T-cell (primary cell): ENCODE measurements at regions of chr9 and their contacts with region 1.

Region 1: GRCh38 chr9:70656281-70656680 is 241.8 kb upstream of the KLF9 start:
- DNase-seq: no peak
- ATAC-seq: no peak
- H3K4me3 ChIP-seq: no peak overlapping the region
- H3K4me3 Mint-ChIP-seq: no peak overlapping the region
- H3K27ac ChIP-seq: no peak overlapping the region
- H3K27ac Mint-ChIP-seq: no peak overlapping the region
- H3K4me1 ChIP-seq: no peaks in the 10 kb centered on the region
- H3K4me1 Mint-ChIP-seq: no peaks in the 10 kb centered on the region
- H3K27me3 ChIP-seq: peaks cover 0 to 4% of the 10 kb centered on the region in 2 experiments
- H3K27me3 Mint-ChIP-seq: peaks cover 2 to 7% of the 10 kb centered on the region in 2 donors

Region 2: DNA sequence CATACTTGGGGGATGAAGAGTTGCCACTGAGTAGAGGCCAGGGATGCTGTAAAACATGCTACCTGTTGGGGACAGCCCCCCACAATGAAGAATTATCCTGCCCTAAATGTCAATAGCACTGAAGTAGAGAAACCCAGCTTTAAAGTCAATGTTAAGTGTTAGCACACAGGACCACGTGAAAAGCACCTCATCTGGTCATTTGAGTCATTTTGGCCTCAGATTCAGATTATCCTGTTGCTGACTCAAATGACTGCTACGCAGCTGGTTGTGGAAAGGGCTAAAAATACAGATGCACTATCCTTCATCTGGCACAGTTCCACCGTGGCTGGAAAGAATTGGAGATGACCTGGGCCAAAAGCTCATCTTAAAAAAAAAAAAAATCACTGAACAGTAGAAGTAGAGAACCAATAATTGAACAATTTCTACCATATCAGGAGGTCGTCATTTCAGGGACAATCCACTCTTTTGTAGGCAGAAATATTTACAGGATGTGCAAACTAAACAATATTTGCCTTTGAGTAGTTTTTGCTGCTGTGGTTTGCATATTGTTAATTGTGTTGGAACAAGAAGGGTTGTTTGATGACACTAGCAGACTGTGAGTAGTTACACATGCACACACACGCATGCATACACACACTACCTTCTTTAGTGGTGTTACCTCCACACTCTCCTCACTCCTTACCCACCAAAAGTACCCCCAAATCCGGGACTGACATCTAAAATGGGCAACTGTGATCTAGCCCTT is 46.6 kb before region 1 on chr9:
- CTCF ChIA-PET with region 1: no interaction called
- POLR2A ChIA-PET with region 1: no interaction called
- DNase-seq: no peak
- ATAC-seq: no peak
- H3K4me3 ChIP-seq: no peak overlapping the region
- H3K4me3 Mint-ChIP-seq: no peak overlapping the region
- H3K27ac ChIP-seq: no peak overlapping the region
- H3K27ac Mint-ChIP-seq: no peak overlapping the region
- H3K4me1 ChIP-seq: no peaks in the 10 kb centered on the region
- H3K4me1 Mint-ChIP-seq: peaks cover 0 to 4% (median 3%) of the 10 kb centered on the region in 3 donors
- H3K27me3 ChIP-seq: no peaks in the 10 kb centered on the region
- H3K27me3 Mint-ChIP-seq: peaks cover 0 to 6% of the 10 kb centered on the region in 2 donors

Region 3: GRCh38 chr9:72407114-72407513 is 1750.8 kb after region 1 on chr9:
- CTCF ChIA-PET with region 1: interaction called in 1 of 2 experiments, 12 read pairs
- POLR2A ChIA-PET with region 1: no interaction called
- DNase-seq: no peak
- ATAC-seq: no peak
- H3K4me3 ChIP-seq: no peak overlapping the region
- H3K4me3 Mint-ChIP-seq: no peak overlapping the region
- H3K27ac ChIP-seq: no peak overlapping the region
- H3K27ac Mint-ChIP-seq: no peak overlapping the region
- H3K4me1 ChIP-seq: no peaks in the 10 kb centered on the region
- H3K4me1 Mint-ChIP-seq: no peaks in the 10 kb centered on the region
- H3K27me3 ChIP-seq: no peaks in the 10 kb centered on the region
- H3K27me3 Mint-ChIP-seq: no peaks in the 10 kb centered on the region